H1 (cell line): ENCODE measurements at regions of chr1 and their contacts with region 1.

Region 1: DNA sequence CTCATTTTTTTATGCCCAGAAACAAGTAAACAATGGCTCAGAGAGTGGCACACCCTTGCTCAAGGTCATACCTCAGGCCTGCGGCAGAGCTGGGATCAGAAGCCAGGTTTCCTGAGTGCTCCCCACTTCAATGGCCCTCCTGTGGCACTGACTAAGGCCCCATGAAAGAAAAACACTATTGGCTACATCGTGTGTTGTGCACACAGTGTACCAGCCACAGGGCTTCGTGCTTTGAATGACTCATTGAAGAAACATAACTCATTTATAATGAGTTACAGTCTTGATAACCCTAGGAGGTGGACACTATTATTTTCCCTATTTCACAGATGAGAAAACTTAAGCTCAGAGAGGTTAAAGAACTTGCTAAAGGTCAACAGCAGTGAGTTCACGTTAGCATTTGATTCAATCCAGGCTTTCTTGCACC is 91.2 kb downstream of the TRABD2B start:
- DNase-seq: no peak
- H3K4me3 ChIP-seq: no peak overlapping the region
- H3K27ac ChIP-seq: no peak overlapping the region
- H3K4me1 ChIP-seq: peaks cover 0 to 2% (median 0%) of the 10 kb centered on the region in 4 experiments; a peak in 1 of 7 replicates
- H3K27me3 ChIP-seq: no peaks in the 10 kb centered on the region
- CTCF ChIP-seq: no peak
- EP300 ChIP-seq: no peak
- POLR2A ChIP-seq: no peak
- RAD21 ChIP-seq: no peak

Region 2: DNA sequence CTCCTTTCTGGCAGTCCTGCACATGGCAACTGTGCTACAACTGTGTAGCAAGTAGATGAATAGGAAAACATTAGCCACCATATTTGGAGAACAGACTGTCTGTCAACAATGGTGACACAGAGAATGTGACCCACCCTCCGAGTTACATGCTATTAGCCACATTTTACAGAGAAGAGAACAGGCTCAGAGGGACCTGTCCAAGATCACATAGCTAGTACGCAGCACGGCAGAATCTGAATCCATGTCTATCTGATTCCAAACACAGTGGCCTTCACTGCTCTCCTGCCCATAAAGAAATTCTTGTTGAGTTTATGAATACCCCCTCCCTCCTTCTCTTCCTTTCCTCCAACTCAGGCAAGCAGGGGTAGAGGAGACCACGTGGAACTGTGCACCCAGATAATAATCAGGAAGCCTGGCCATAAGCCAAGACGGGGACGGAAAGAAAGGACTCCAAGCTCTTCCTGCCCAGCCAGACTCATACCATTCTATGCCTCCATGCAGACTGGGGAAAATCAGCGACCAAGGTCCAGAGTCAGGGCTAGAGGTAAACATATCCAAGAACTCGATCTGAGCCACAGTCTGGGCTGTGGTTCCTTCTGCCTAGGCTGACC is 12.3 kb after region 1 on chr1:
- CTCF ChIA-PET with region 1: interaction called, 12 read pairs
- POLR2A ChIA-PET with region 1: no interaction called
- DNase-seq: no peak
- H3K4me3 ChIP-seq: no peak overlapping the region
- H3K27ac ChIP-seq: no peak overlapping the region
- H3K4me1 ChIP-seq: peaks cover 0 to 8% (median 4%) of the 10 kb centered on the region in 4 experiments; a peak in 4 of 7 replicates
- H3K27me3 ChIP-seq: no peaks in the 10 kb centered on the region
- CTCF ChIP-seq: no peak
- EP300 ChIP-seq: no peak
- POLR2A ChIP-seq: no peak
- RAD21 ChIP-seq: no peak